Activated T-helper 2 cell treated with anti-CD3 and anti-CD28 coated beads, Interferon-gamma antibody, Interleukin-2, Interleukin-4, amounts not matched to agents 10 μg/mL and 5 μg/mL and 100 μg/mL, durations not matched to agents 14 hours and 24 hours and 36 hours (primary cell): ENCODE measurements at regions of chr6 and their contacts with region 1.

Region 1: DNA sequence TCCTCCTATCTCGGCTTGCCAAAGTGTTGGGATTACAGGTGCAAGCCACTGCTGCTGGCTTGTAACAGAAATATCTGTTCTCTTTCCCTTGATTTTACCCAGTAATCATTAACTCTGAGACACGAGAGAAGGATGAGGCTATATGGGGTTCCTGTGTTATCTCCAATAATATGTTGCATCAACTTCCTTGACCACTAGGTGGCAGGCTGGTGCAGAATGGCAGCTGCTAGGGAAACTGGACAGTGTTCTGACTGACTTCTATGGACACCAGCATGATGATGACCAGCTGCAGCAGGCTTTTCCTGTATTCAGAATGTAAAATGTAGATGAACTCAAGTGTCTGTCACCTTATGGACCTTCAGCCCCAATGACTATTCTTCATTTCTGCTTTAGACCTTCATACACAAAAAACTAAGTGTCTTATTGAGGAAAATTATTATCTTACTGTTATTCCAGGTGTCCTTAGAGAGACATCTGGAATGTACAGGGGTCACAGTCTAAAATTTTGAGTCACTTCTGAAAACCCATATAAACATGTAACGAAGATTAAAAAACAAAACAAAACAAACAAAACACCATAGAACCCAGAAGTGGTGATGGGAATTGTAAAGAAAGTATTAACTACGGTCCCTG is 20.4 kb upstream of the CD109 start:
- DNase-seq: peak; percentile 58
- H3K4me3 Mint-ChIP-seq: no peak overlapping the region
- H3K27ac Mint-ChIP-seq: no peak overlapping the region
- H3K4me1 Mint-ChIP-seq: peaks cover 6% of the 10 kb centered on the region
- H3K27me3 Mint-ChIP-seq: peaks cover 6% of the 10 kb centered on the region

Region 2: GRCh38 chr6:73732845-73733675 is 57.5 kb after region 1 on chr6:
- intact Hi-C with region 1: loop called (anchors 1 kb)
- DNase-seq: peak; percentile 66
- H3K4me3 Mint-ChIP-seq: no peak overlapping the region
- H3K27ac Mint-ChIP-seq: peak overlapping the region; percentile 47
- H3K4me1 Mint-ChIP-seq: peaks cover 28% of the 10 kb centered on the region
- H3K27me3 Mint-ChIP-seq: no peaks in the 10 kb centered on the region